ENCODE measurements at regions of chr11 and their contacts with region 1.

Region 1: DNA sequence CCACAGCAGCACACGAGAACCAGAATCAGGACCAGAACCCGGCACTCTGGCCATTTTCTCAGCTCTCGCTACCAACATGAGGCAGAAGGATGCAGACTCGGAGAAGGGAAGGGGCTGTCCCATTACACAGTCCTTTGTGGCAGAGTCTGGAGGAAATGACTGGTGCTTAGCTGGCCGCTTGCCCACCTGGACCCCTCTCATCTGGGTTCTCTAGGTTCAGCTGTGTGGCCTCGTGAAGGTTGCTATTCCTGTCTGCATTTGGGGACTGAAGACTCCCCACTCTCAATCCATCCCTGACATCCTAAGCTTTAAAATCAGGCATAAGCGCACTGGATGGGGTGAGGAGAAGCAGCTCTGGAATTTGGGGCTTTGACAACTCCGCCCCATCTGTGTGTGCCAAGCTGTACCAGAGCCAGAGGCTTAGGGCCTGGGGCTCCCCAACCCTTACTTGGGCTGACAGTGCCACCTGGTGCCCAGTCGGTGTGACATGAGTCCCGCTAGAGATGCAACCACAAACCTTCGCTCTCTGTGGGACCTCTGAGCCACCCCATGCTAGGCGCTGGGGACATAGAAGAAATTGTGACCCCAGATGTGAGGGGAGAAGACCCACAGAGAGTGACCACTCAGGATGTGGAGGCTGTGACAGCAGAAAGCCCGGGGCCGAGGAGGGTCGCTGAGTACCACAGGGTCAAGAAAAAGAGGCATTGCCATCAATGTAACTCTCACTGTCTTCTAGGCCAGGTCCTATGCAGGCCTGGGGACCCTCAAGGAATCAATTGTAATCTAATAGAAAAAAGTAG is 35.9 kb upstream of the FCHSD2 start:
- DNase-seq: peak; percentile 82
- H3K4me3 ChIP-seq: no peak overlapping the region
- H3K27ac ChIP-seq: no peak overlapping the region
- H3K4me1 ChIP-seq: no peaks in the 10 kb centered on the region
- H3K27me3 ChIP-seq: no peaks in the 10 kb centered on the region
- CTCF ChIP-seq: peak; percentile 77

Region 2: DNA sequence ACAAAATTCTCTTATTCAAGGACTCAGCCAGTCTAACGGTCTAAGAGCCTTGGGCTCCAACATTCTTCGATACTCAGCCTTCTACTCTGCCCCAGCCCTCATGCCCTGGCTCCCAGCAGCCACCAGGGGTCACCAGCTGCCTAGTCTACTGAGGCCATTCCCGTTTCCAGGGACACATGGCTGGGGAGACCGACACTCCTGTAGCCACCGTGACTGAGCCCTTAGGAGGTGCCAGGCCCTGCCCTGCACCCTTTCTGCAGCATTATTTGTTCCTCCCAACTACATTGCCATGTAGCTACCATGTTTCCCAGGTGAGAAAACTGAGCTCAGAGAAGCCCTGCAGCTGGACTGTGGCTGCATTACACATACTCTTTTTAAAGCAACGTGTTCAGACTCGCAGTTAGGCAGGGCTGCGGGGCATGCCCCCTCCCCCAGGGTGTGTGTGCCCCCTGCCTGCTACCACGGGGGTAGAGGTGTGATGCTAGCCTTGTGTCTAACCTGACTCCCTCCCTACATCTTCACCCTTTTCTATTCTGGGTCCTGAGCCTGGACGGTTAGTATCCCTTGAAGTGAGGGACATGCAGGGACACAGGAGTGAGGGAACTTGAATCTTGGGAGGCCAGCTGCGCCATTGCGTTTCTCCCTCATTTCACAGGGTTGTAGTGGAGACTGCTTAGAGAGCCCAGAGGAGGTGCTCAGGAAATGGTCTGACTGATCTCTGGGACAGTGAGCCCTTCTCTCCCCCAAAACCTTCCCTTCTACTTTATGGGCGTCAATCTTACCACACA is 346.3 kb before region 1 on chr11:
- intact Hi-C with region 1: loop called (anchors 2 kb)
- DNase-seq: peak; percentile 85
- H3K4me3 ChIP-seq: no peak overlapping the region
- H3K27ac ChIP-seq: no peak overlapping the region
- H3K4me1 ChIP-seq: peaks cover 4% of the 10 kb centered on the region
- H3K27me3 ChIP-seq: no peaks in the 10 kb centered on the region
- CTCF ChIP-seq: peak; percentile 92

Region 3: DNA sequence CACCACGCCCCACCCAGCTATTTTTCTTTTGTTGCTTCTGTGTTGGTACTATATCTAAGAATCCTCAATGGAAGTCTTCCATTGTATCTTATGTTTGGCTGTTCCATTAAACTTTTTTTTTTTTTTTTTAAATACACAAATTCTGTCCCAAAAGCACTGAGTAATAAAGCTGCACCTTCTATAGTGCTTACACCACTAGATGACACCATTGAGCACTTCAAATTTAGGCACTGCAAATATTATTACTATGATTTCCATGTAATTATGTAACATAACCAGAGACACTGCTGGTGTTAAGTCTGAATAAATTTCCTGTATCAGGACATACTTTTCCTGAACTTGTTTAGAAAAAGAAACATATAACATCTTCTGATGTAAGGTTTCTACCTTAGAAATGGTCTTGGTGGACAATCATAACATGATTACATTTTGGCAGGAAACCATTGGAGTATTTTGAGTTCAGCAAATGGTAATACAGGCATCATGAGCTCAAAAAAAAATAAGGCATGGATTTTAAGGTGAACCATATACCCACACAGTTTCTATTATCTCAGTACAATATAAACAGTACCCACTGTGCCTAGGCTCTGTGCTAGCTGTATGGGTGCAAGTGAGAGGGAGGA is 253.3 kb before region 1 on chr11:
- intact Hi-C with region 1: loop called (anchors 2 kb)
- DNase-seq: no peak
- H3K4me3 ChIP-seq: no peak overlapping the region
- H3K27ac ChIP-seq: no peak overlapping the region
- H3K4me1 ChIP-seq: no peaks in the 10 kb centered on the region
- H3K27me3 ChIP-seq: no peaks in the 10 kb centered on the region
- CTCF ChIP-seq: peak; percentile 53

Region 4: DNA sequence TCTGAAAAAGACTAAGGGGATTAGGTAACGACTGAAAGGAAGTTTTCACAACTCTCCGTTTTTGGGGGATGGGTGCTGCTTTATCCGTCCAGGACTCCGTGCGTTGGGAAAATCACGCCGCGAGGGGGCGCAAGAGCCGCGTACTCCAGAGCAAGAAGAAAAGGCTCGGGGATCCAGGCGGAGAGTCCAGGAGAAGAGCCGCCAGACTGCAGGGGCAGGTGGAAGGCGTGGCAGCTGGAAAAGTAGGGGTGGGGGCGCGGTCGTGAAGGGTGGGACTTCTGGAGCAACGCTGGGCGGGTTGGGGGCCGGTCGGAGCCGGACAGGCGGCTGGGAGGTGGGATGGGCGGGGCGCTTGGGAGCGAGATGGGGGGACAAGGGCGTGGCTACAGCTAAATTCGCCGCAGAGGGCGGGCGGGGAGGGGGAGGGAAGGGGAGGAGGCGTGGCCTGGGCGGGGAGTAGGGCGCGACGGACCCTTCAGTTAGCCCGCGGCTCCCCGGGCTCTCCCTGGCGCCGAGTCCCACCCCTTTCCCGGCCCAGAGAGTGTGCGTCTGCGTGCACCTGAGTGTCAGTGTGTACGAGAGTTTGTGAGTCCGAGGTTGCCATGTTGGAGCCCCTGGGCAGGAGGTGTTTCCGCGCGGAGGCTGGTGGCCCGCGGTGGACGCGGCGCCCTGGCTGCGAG is 129.5 kb after region 1 on chr11:
- intact Hi-C with region 1: no loop called
- DNase-seq: peak; percentile 99
- H3K4me3 ChIP-seq: peak overlapping the region; percentile 60
- H3K27ac ChIP-seq: peak overlapping the region; percentile 87
- H3K4me1 ChIP-seq: peaks cover 4% of the 10 kb centered on the region
- H3K27me3 ChIP-seq: no peaks in the 10 kb centered on the region
- CTCF ChIP-seq: peak; percentile 61

Region 5: DNA sequence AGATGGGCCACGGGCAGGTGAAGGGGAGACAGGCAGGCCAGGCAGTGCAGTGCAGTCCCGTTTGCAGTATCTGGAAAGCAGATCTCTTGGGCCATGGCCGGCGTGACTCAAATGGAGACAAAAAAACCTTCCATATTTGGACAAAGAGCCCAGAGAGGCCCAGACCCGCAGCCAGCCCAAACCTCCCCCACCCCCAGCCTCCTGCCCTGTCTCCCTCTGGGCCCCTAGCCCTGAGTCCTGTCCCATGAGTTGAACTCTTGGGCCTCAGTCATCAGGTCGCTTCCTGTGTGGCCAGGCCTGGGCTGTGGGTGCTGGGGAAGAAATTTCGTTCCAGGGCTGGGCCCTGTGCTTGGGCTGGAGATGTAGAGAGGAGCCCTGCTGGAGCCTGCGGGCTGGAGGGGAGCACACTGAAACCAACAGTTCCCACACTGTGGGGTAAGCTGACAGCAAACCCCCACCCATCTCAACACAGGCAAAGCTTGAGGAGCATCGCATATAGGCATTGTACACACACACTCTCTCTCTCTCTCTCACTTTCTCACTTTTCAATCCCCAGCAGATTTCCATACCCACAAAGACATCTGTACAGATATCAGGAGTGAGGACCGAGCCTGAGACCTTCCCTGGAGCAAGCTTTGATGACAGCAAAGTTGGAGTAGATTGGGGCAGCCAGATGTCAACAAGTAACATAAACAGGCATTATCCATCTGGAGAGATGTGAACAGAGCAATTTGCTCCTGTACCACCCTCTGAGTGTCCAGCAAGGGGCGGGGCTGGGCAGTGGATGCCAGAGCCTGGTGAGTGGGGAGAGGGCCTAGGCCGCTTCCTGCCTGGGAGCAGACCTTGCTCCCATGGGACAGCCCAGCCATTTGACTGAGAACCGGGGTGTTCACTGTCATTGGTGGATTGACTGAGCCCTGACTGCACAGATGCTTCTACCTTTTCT is 147.3 kb after region 1 on chr11:
- intact Hi-C with region 1: no loop called
- DNase-seq: no peak
- H3K4me3 ChIP-seq: no peak overlapping the region
- H3K27ac ChIP-seq: peak overlapping the region; percentile 47
- H3K4me1 ChIP-seq: no peaks in the 10 kb centered on the region
- H3K27me3 ChIP-seq: no peaks in the 10 kb centered on the region
- CTCF ChIP-seq: no peak